Adrenal gland (tissue), 19 donors: ENCODE measurements at regions of chr20 and their contacts with region 1.

Region 1: GRCh38 chr20:35215066-35215956 is 11.2 kb upstream of the MMP24 start:
- DNase-seq: no peak
- H3K4me3 ChIP-seq: no peak overlapping the region
- H3K27ac ChIP-seq: no peak overlapping the region
- H3K4me1 ChIP-seq: no peaks in the 10 kb centered on the region
- H3K27me3 ChIP-seq: no peaks in the 10 kb centered on the region
- CTCF ChIP-seq: no peak
- POLR2A ChIP-seq: no peak

Region 2: GRCh38 chr20:34850969-34851368 is 364.3 kb before region 1 on chr20:
- intact Hi-C with region 1: loop called in 1 of 2 experiments (anchors 10 kb)
- DNase-seq: peak in 1 of 7 donors; percentile 28
- H3K4me3 ChIP-seq: no peak overlapping the region
- H3K27ac ChIP-seq: no peak overlapping the region
- H3K4me1 ChIP-seq: no peaks in the 10 kb centered on the region
- H3K27me3 ChIP-seq: no peaks in the 10 kb centered on the region
- CTCF ChIP-seq: no peak
- POLR2A ChIP-seq: no peak

Region 3: DNA sequence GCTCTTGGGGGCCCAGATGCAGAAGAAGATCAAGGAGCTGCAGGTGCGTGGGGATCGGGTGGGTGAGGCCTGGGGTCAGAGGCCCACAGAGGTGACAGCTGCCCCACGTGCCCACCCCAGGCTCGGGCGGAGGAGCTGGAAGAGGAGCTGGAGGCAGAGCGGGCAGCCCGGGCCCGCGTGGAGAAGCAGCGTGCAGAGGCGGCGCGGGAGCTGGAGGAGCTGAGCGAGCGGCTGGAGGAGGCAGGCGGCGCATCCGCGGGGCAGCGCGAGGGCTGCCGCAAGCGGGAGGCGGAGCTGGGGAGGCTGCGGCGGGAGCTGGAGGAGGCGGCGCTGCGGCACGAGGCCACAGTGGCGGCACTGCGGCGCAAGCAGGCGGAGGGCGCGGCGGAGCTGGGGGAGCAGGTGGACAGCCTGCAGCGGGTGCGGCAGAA is 218.2 kb before region 1 on chr20:
- intact Hi-C with region 1: loop called in 1 of 2 experiments (anchors 10 kb)
- DNase-seq: peak; percentile 71 to 81 (median 74)
- H3K4me3 ChIP-seq: no peak overlapping the region
- H3K27ac ChIP-seq: peak overlapping the region in 1 of 5 donors; percentile 20
- H3K4me1 ChIP-seq: peaks cover 0 to 3% of the 10 kb centered on the region in 2 donors
- H3K27me3 ChIP-seq: no peaks in the 10 kb centered on the region
- CTCF ChIP-seq: no peak
- POLR2A ChIP-seq: peak in 1 of 2 donors; percentile 26